Endothelial cell of umbilical vein (primary cell): ENCODE measurements at regions of chr15 and their contacts with region 1.

Region 1: DNA sequence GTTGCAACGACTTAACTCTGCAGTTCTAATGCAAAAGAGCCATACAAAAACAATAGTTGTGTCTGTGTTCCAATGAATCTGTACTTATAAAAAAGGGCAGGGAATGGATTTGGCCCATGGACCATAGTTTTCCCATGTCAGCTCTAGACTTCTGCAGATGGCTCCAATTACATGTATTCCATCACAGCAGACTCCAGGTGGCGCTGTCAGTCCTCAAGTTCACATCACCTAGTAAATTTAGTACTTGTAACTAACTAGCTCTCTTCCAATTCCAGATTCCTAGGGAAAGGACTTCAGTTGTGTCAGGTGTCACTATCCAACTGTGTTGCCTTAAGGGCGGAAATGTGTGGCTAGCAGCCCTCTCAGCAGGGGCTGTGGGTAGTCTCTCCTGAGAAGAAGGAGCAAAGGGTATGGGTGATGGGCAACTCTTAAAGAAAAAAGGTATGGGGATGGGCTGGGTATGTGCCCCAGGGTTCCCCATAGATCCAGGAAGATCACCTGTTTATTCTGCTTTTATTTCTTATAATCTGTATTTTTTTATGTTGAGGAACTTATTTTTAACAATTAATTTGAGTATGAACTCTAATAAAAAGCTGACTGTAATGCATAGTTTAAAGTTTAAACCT is 36.2 kb downstream of the BBS4 start:
- DNase-seq: peak; percentile 66
- H3K4me3 ChIP-seq: no peak overlapping the region
- H3K27ac ChIP-seq: no peak overlapping the region
- H3K4me1 ChIP-seq: no peaks in the 10 kb centered on the region
- H3K27me3 ChIP-seq: no peaks in the 10 kb centered on the region
- CTCF ChIP-seq: peak; percentile 74 to 77
- POLR2A ChIP-seq: no peak

Region 2: GRCh38 chr15:72389231-72389630 is 333.0 kb before region 1 on chr15:
- CTCF ChIA-PET with region 1: no interaction called
- POLR2A ChIA-PET with region 1: no interaction called
- dilution Hi-C with region 1: no loop called
- intact Hi-C with region 1: no loop called
- DNase-seq: no peak
- H3K4me3 ChIP-seq: no peak overlapping the region
- H3K27ac ChIP-seq: no peak overlapping the region
- H3K4me1 ChIP-seq: no peaks in the 10 kb centered on the region
- H3K27me3 ChIP-seq: peaks cover 8 to 12% of the 10 kb centered on the region in 2 experiments
- CTCF ChIP-seq: no peak
- POLR2A ChIP-seq: no peak

Region 3: GRCh38 chr15:72599855-72600464 is 122.2 kb before region 1 on chr15:
- CTCF ChIA-PET with region 1: interaction called, 12 read pairs
- POLR2A ChIA-PET with region 1: no interaction called
- dilution Hi-C with region 1: no loop called
- intact Hi-C with region 1: no loop called
- DNase-seq: peak; percentile 56
- H3K4me3 ChIP-seq: no peak overlapping the region
- H3K27ac ChIP-seq: no peak overlapping the region
- H3K4me1 ChIP-seq: no peaks in the 10 kb centered on the region
- H3K27me3 ChIP-seq: no peaks in the 10 kb centered on the region
- CTCF ChIP-seq: peak; percentile 45 to 58
- POLR2A ChIP-seq: no peak

Region 4: DNA sequence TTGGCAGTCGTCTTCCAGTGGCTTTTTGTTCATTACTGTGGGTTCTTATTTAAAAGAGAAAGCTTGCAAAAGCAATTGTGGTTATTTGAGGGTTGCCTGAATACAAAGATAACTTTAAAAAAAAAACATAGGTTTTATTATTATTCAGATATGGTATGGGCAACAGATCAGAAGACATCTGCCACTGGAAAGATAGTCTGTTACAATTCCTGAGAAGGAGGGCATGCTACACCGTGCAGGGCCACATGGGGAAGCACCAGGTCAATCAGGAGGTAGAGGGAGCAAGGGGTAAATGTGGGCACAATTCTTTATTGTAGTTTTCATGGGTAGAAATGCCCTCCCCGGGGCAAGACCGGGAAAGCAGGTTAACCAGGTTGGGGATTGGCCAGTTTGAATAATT is 10.3 kb after region 1 on chr15:
- CTCF ChIA-PET with region 1: interaction called, 34 read pairs
- POLR2A ChIA-PET with region 1: no interaction called
- dilution Hi-C with region 1: no loop called
- intact Hi-C with region 1: no loop called
- DNase-seq: no peak
- H3K4me3 ChIP-seq: no peak overlapping the region
- H3K27ac ChIP-seq: no peak overlapping the region
- H3K4me1 ChIP-seq: no peaks in the 10 kb centered on the region
- H3K27me3 ChIP-seq: no peaks in the 10 kb centered on the region
- CTCF ChIP-seq: no peak
- POLR2A ChIP-seq: no peak

Region 5: DNA sequence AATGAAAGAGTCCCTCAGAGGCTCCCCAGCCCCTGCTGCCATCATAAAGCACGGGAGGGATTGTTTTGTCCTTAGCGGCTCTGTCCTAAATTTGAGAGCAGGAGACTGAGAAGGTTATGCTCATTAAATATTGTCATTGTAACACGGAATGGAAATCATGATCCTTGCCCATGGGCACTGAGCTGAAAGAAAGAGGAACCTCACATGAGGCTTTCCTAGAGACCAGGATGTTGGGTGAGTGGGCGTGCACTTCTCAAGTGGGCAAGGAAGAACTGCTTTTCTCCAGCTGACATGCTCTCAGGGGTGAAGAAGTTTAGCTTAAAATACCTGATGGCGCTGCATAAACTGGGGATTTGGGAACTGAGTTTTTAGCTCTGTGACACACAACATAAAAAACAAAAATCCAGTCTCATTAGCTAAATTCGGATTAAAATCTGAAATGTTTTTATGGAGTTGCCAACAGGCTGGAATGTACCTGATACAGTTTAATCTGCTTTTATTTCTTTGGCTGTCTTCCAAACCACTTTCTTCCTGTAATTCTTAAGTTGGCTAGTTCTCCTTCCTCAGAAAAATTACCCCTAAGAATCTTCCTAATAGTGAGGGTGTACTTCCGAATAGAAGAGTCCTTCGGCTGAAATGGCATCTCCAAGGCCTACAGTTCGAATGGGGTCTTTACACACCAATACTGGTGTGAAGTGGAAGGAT is 29.7 kb after region 1 on chr15:
- CTCF ChIA-PET with region 1: interaction called, 46 read pairs
- POLR2A ChIA-PET with region 1: no interaction called
- dilution Hi-C with region 1: no loop called
- intact Hi-C with region 1: no loop called
- DNase-seq: no peak
- H3K4me3 ChIP-seq: no peak overlapping the region
- H3K27ac ChIP-seq: no peak overlapping the region
- H3K4me1 ChIP-seq: peaks cover 5% of the 10 kb centered on the region
- H3K27me3 ChIP-seq: no peaks in the 10 kb centered on the region
- CTCF ChIP-seq: no peak
- POLR2A ChIP-seq: no peak

Region 6: GRCh38 chr15:73081321-73081958 is 359.3 kb after region 1 on chr15:
- CTCF ChIA-PET with region 1: interaction called, 106 read pairs
- POLR2A ChIA-PET with region 1: no interaction called
- dilution Hi-C with region 1: no loop called
- intact Hi-C with region 1: loop called (anchors 1 kb)
- DNase-seq: peak; percentile 65
- H3K4me3 ChIP-seq: no peak overlapping the region
- H3K27ac ChIP-seq: no peak overlapping the region
- H3K4me1 ChIP-seq: no peaks in the 10 kb centered on the region
- H3K27me3 ChIP-seq: peaks cover 49 to 77% of the 10 kb centered on the region in 2 experiments
- CTCF ChIP-seq: peak; percentile 21 to 44
- POLR2A ChIP-seq: no peak

Region 7: DNA sequence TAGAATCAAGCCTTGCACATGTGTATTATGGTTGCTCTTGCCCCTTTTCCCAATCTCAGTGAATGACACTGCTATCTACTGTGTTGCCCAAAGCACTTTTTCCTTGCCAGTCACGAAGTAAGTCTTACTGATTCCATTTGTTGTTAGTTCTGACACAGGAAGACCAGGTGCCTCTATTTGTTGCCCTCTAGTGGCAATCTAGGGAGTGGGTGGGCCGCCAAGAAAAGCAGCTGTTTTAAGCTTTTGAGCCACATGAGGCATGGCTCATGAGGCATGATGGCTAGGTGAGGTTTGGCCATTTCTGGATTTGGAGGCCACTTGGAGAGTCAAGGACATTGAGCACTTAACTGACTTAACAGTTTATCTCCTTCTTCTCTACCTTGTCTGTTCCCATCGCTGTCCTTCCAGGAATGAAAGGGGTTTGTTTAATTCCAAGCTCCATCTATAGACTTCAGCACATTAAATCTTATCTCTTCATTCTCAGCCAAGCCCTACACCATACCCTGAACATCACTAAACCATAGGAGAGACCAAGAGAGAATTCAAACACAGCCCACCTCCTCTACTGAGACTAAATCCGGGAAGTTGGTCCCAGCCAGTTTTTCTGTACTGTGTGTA is 543.5 kb after region 1 on chr15:
- CTCF ChIA-PET with region 1: interaction called, 30 read pairs
- POLR2A ChIA-PET with region 1: no interaction called
- dilution Hi-C with region 1: no loop called
- intact Hi-C with region 1: no loop called
- DNase-seq: peak; percentile 57
- H3K4me3 ChIP-seq: no peak overlapping the region
- H3K27ac ChIP-seq: no peak overlapping the region
- H3K4me1 ChIP-seq: no peaks in the 10 kb centered on the region
- H3K27me3 ChIP-seq: no peaks in the 10 kb centered on the region
- CTCF ChIP-seq: peak; percentile 63 to 71
- POLR2A ChIP-seq: no peak